ENCODE measurements at regions of chr4 and their contacts with region 1.

Region 1: DNA sequence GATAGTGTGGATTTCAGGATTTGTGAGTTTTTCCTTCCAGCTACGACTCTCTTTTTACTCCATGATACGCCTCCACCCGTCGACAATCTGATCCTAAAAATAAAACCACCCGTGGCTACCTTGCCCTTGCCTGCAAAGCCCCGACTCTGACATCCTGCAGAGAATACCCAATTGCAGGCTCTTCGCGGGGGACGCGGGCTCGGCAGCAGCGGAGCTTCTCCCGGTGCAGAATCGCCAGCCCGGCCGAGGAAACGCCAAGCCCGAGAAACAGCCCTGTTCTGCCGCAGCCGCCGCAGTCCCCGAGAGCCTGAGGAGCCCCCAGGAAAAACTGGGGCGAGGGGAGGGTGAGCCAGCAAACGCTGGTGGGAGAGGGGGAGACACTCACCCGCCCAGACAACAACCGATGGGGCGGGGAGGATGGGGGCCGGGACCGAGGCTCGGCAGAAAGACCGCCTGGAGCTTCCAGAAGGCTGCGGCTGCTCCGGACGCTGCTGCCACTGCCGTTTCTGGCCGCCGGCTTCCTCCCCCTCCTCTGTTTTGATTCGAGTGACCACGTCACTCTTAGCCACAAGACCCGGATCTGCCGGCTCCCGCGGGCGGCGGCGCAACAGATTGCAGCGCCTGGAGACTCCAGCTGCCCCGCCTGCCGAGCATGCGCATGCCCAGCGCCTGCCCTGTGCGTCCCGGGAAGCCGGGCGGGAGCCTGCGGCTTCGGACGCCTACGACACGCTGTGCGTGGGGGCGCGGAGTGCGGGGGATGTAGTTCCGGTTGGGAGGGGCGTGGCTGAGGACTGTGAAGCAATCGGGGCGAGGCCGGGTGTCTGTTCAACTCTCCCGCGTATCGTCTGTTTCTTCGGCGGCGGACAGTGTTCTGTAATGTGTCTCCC is at the start of gene SMIM14:
- DNase-seq: peak; percentile 98
- H3K4me3 ChIP-seq: peak within 1 kb of the TSS; percentile 93 to 95
- H3K27ac ChIP-seq: peak within 1 kb of the TSS; percentile 97 to 99
- H3K4me1 ChIP-seq: peaks cover 12% of the 10 kb centered on the region
- H3K27me3 ChIP-seq: no peaks in the 10 kb centered on the region
- CTCF ChIP-seq: peak in 2 of 3 experiments; percentile 16 to 44
- POLR2A ChIP-seq: peak; percentile 86
- total RNA-seq, gene SMIM14: 20.4 to 32.0 TPM

Region 2: GRCh38 chr4:39527273-39528060 is 111.1 kb before region 1 on chr4 and contains the start of gene UGDH:
- intact Hi-C with region 1: loop called (anchors 10 kb)
- DNase-seq: peak; percentile 97
- H3K4me3 ChIP-seq: peak within 1 kb of the TSS; percentile 82 to 93
- H3K27ac ChIP-seq: peak within 1 kb of the TSS; percentile 90 to 96
- H3K4me1 ChIP-seq: peaks cover 9% of the 10 kb centered on the region
- H3K27me3 ChIP-seq: no peaks in the 10 kb centered on the region
- CTCF ChIP-seq: peak in 1 of 3 experiments; percentile 8
- POLR2A ChIP-seq: peak; percentile 73
- total RNA-seq, gene UGDH: 11.3 to 21.4 TPM

Region 3: GRCh38 chr4:40193016-40193571 is 554.5 kb after region 1 on chr4:
- intact Hi-C with region 1: no loop called
- DNase-seq: no peak
- H3K4me3 ChIP-seq: no peak overlapping the region
- H3K27ac ChIP-seq: no peak overlapping the region
- H3K4me1 ChIP-seq: no peaks in the 10 kb centered on the region
- H3K27me3 ChIP-seq: no peaks in the 10 kb centered on the region
- CTCF ChIP-seq: no peak
- POLR2A ChIP-seq: no peak